ENCODE measurements at regions of chr20 and their contacts with region 1.

Region 1: DNA sequence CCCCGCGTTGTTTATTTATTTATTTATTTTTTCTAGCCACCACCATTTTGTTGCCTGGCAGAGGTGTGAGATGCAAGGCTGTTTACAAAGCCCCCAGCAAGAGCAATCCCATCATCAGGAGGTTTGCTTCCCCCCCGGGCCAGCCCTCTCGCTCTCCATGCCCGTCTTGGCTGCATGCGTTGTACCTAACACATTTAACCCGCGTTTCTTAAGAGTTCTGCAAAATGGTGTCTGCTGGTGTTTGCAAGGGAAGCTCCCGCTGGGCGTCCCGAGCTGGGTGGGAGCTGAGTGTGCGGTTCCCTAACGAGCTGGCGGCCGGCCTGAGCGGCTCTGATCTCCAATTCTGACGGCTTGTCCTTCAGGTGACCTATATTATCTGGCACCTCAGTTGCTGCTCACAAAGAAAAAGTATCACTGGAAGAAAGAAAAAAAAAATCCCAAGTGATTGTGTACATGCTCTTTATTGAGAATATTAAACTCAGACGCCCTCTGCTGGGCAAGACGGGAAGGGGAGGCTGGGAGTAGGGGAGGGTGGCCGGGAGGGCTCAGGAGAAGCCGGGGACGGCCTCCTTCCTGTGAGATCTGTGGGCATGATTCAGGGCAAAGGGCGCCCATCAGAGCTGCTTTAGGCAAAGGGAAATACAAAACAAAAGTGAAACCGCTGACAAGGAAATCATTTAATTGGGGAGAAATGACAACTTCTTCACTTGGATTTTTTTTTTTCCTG is 154.8 kb downstream of the BCAS1 start:
- DNase-seq: peak; percentile 86
- ATAC-seq: peak; percentile 88
- H3K4me3 ChIP-seq: peak overlapping the region; percentile 63
- H3K27ac ChIP-seq: peak overlapping the region; percentile 82
- H3K4me1 ChIP-seq: peaks cover 31% of the 10 kb centered on the region
- H3K27me3 ChIP-seq: no peaks in the 10 kb centered on the region
- CTCF ChIP-seq: peak; percentile 93
- POLR2A ChIP-seq: peak; percentile 53; the same call in 1 of the 2 replicates
- RAD21 ChIP-seq: peak; percentile 92

Region 2: DNA sequence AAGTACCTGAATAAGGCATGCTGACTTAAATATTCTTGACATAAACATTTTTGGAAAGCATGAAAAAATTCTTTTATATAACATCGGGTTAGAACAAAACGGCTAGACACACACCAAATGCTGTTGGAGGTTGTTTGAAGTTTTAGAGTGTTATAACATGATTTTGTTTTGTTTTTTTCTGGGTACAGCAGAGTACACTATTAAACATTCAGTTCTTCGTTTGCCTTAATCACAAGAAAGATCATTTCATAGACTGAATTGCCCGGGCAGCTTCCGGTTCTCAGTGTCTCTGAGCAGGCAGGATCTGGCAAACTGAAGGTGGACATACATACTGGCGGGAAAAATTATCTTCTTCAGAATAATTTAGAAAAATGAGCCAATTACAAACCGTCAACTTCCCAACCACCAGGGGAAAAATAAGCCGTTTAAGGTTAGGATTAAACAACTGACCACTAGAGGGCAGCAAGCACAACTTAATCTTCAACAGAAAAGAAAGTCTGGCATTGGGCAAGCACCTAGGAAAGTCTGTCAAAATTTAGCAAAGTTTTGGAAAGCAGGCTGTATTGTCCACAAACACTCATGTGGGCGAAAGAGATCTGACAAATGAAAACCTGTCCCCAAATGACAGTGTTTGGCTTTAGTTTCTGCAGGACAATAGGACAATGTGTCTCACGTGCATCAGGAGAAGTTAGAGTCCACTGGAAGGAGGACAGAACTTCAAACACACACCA is 337.0 kb before region 1 on chr20:
- CTCF ChIA-PET with region 1: interaction called, 5 read pairs
- POLR2A ChIA-PET with region 1: no interaction called
- dilution Hi-C with region 1: no loop called
- in situ Hi-C with region 1: no loop called
- intact Hi-C with region 1: loop called (anchors 1 kb)
- DNase-seq: peak; percentile 89
- ATAC-seq: peak; percentile 64
- H3K4me3 ChIP-seq: no peak overlapping the region
- H3K27ac ChIP-seq: peak overlapping the region; percentile 60
- H3K4me1 ChIP-seq: peaks cover 18% of the 10 kb centered on the region
- H3K27me3 ChIP-seq: no peaks in the 10 kb centered on the region
- CTCF ChIP-seq: peak; percentile 96
- POLR2A ChIP-seq: peak; percentile 39; the same call in 1 of the 2 replicates
- RAD21 ChIP-seq: peak; percentile 90

Region 3: DNA sequence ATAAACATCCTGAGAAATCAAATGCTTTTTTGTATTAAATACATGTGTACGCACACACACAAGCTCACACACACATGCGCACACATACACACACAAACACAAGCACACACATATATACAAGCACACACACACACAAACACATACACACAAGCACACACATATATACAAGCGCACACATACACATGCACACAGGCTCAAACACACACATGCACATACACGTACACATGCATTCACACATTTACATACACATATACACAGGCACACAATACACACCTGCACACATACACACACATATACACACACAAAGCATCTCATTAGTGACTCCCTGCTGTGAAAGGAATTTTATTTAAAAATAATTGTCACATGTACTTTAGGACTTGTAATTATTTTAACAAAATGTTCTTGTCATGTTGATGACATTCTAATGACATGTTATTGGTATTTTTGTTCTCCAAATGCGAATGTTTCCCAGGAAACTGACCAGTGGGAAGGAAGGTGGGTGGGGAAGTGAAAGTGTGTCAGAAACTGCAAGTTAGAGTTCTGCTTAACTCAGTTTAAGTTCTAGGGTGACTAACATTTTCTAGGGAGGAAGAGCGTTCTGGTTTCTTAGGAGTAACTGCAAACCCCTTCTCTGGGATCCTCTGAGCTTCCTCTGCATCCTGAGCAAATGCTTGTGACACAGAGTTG is 208.1 kb before region 1 on chr20:
- CTCF ChIA-PET with region 1: no interaction called
- POLR2A ChIA-PET with region 1: no interaction called
- dilution Hi-C with region 1: no loop called
- in situ Hi-C with region 1: no loop called
- intact Hi-C with region 1: loop called (anchors 2 kb)
- DNase-seq: peak; percentile 66
- ATAC-seq: peak; percentile 48
- H3K4me3 ChIP-seq: no peak overlapping the region
- H3K27ac ChIP-seq: peak overlapping the region; percentile 50; the same call in 1 of the 2 replicates
- H3K4me1 ChIP-seq: peaks cover 18% of the 10 kb centered on the region
- H3K27me3 ChIP-seq: no peaks in the 10 kb centered on the region
- CTCF ChIP-seq: no peak
- POLR2A ChIP-seq: no peak
- RAD21 ChIP-seq: 0 out of 2 replicates have a peak, but pooled peaks have one; percentile 11

Region 4: DNA sequence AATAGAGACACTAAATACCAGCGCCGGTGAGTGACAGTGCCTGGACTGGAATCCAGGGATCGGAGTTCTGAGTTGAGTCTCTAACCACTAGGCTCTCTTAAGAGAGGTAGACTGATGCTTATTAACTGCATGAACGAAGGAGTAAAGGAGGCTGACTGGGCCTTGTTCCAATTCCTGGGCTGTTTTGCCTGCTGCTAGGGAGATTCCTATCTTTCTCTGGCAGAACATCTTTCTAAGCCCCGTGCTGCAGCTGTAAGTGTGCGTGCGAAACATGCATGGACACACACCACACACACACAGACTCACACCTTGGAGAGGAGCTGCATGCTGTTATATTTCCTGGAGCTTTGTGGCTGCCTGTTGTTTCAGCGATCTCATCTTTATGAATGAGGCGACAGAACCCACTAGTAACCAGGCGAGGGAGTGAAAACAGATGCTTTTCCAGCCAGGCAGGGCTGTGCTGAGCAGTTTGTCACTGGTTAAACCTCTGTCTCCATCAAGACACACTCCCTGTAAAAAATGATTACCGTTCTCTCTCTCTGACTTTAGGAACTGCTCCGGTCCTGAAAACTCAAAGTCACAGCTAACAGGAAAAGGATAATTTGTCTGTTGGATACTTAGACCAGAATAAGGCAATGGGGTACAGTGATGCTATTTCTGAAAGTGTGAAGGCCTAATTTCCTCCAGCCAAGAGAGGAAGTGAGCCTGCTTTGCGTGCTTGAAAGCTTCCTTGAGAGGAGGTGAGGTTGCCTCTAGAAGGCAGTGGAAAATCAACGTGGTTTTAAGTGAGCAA is 164.6 kb before region 1 on chr20:
- CTCF ChIA-PET with region 1: no interaction called
- POLR2A ChIA-PET with region 1: no interaction called
- dilution Hi-C with region 1: no loop called
- in situ Hi-C with region 1: no loop called
- intact Hi-C with region 1: loop called (anchors 5 kb)
- DNase-seq: peak; percentile 91
- ATAC-seq: peak; percentile 71
- H3K4me3 ChIP-seq: no peak overlapping the region
- H3K27ac ChIP-seq: peak overlapping the region; percentile 69
- H3K4me1 ChIP-seq: peaks cover 22% of the 10 kb centered on the region
- H3K27me3 ChIP-seq: no peaks in the 10 kb centered on the region
- CTCF ChIP-seq: no peak
- POLR2A ChIP-seq: peak; percentile 49
- RAD21 ChIP-seq: no peak; the same call in 1 of the 2 replicates

Region 5: GRCh38 chr20:53828682-53829254 is 86.8 kb before region 1 on chr20:
- CTCF ChIA-PET with region 1: interaction called, 10 read pairs
- POLR2A ChIA-PET with region 1: no interaction called
- dilution Hi-C with region 1: no loop called
- in situ Hi-C with region 1: no loop called
- intact Hi-C with region 1: loop called (anchors 1 kb)
- DNase-seq: peak; percentile 95
- ATAC-seq: peak; percentile 79
- H3K4me3 ChIP-seq: peak overlapping the region; percentile 41; the same call in 1 of the 2 replicates
- H3K27ac ChIP-seq: peak overlapping the region; percentile 99
- H3K4me1 ChIP-seq: peaks cover 6% of the 10 kb centered on the region
- H3K27me3 ChIP-seq: no peaks in the 10 kb centered on the region
- CTCF ChIP-seq: peak; percentile 32; the same call in 1 of the 2 replicates
- POLR2A ChIP-seq: no peak; the same call in 1 of the 2 replicates
- RAD21 ChIP-seq: peak; percentile 60

Region 6: DNA sequence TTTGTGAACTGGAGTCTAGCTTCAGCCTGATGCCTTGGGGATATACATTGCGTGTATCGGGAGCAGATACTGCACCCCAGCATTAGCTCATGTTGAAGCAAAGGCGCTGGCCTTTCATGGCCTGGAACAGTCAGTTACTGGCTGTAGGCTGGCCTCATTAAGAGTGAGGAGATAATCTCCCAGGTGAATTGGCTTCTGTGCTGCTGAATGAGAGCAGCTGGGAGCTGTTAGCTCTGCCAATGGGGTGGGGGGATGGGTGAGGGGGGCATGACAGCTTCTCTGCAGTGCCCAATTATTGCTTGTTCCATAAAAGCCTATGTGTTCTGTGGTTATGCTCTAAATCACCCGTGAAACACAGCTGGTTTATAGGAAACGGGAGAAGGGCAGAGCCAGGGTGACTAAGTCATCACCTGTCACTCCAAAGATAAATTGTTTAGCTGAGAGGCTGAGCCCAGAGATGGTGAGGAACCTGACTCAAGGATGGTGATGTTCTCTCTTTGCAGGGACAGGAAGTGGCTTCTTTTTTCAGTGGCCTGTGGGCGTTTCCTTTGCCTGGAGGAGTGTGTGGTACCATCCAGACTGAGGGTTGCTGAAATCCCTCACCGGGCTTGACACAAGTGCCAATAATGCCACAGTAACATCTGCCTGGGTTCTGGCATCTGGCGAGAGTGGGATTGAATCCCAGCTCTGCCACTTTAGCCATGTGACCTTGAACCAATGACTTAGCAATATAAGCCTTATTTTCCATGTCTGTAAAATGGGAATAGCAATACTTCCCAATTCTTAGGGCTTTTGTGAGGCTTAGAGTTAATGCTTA is 16.1 kb before region 1 on chr20:
- CTCF ChIA-PET with region 1: interaction called, 13 read pairs
- POLR2A ChIA-PET with region 1: no interaction called
- dilution Hi-C with region 1: no loop called
- in situ Hi-C with region 1: no loop called
- intact Hi-C with region 1: no loop called
- DNase-seq: peak; percentile 87
- ATAC-seq: peak; percentile 66
- H3K4me3 ChIP-seq: no peak overlapping the region
- H3K27ac ChIP-seq: peak overlapping the region; percentile 39
- H3K4me1 ChIP-seq: peaks cover 12% of the 10 kb centered on the region
- H3K27me3 ChIP-seq: no peaks in the 10 kb centered on the region
- CTCF ChIP-seq: no peak
- POLR2A ChIP-seq: no peak
- RAD21 ChIP-seq: no peak

Region 7: DNA sequence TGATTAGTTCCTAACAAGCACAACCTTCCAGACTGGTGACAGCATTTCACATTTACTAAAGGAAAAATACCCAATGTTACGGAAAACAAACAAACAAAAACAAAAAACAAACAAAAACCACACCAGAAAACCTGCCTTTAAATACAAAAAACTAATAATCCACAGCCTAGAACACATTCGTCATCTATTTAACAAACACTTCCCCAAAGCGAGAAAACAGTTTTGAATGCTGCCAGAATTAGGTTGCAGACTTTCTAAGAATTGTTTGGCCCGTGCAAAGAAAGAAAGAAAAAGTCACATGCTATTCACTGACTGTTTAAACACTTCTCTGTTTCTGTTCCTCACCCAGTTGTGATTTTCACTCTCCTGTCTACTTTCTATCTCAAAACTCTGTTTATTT is 102.2 kb after region 1 on chr20:
- CTCF ChIA-PET with region 1: no interaction called
- POLR2A ChIA-PET with region 1: no interaction called
- dilution Hi-C with region 1: no loop called
- in situ Hi-C with region 1: no loop called
- intact Hi-C with region 1: no loop called
- DNase-seq: no peak
- ATAC-seq: no peak
- H3K4me3 ChIP-seq: no peak overlapping the region
- H3K27ac ChIP-seq: no peak overlapping the region
- H3K4me1 ChIP-seq: no peaks in the 10 kb centered on the region
- H3K27me3 ChIP-seq: no peaks in the 10 kb centered on the region
- CTCF ChIP-seq: no peak
- POLR2A ChIP-seq: no peak
- RAD21 ChIP-seq: no peak

Measured in IMR-90 (cell line).